Caco-2 (cell line): ENCODE measurements at regions of chr1 and their contacts with region 1.

Region 1: GRCh38 chr1:224116131-224116530 is 2.2 kb downstream of the FBXO28 start:
- DNase-seq: peak in 1 of 2 experiments; percentile 9
- H3K4me3 ChIP-seq: no peak overlapping the region; the same call in 1 of the 2 replicates
- H3K4me3 Mint-ChIP-seq: no peak overlapping the region
- H3K27ac Mint-ChIP-seq: no peak overlapping the region
- H3K4me1 ChIP-seq: peaks cover 8% of the 10 kb centered on the region; the same call in 1 of the 2 replicates
- H3K4me1 Mint-ChIP-seq: no peaks in the 10 kb centered on the region
- H3K27me3 ChIP-seq: no peaks in the 10 kb centered on the region
- H3K27me3 Mint-ChIP-seq: no peaks in the 10 kb centered on the region
- CTCF ChIP-seq: peak; percentile 40 to 55

Region 2: DNA sequence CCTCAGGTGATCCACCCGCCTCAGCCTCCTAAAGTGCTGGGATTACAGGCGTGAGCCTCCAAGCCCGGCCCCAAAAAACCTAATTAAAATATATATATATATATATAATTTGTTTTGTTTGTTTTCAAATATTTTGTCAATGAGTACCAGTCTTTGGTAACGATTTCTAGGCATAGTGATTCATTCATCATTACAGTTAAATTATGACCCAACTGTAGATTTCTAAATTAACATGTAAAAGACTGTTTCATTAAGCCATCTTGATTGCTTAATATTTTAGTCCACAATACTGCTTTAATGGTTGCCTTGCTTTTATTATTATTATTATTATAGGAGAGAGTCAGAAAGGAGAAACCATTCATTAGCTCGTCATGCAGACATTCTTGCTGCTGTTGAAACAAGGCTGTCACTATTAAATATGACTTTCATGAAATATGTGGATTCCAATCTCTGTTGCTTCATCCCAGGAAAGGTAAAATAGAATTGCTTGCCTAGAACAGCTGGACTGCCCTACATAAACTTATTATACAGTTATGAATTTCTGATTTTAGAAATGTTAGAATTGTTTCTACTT is 17.7 kb after region 1 on chr1:
- CTCF ChIA-PET with region 1: no interaction called
- POLR2A ChIA-PET with region 1: no interaction called
- intact Hi-C with region 1: no loop called
- DNase-seq: no peak
- H3K4me3 ChIP-seq: no peak overlapping the region
- H3K4me3 Mint-ChIP-seq: no peak overlapping the region
- H3K27ac Mint-ChIP-seq: no peak overlapping the region
- H3K4me1 ChIP-seq: peaks cover 3% of the 10 kb centered on the region; the same call in 1 of the 2 replicates
- H3K4me1 Mint-ChIP-seq: no peaks in the 10 kb centered on the region
- H3K27me3 ChIP-seq: no peaks in the 10 kb centered on the region
- H3K27me3 Mint-ChIP-seq: no peaks in the 10 kb centered on the region
- CTCF ChIP-seq: no peak

Region 3: GRCh38 chr1:224223819-224224714 is 107.9 kb after region 1 on chr1:
- CTCF ChIA-PET with region 1: no interaction called
- POLR2A ChIA-PET with region 1: no interaction called
- intact Hi-C with region 1: loop called (anchors 5 kb)
- DNase-seq: no peak
- H3K4me3 ChIP-seq: no peak overlapping the region
- H3K4me3 Mint-ChIP-seq: no peak overlapping the region
- H3K27ac Mint-ChIP-seq: no peak overlapping the region
- H3K4me1 ChIP-seq: peaks cover 36% of the 10 kb centered on the region
- H3K4me1 Mint-ChIP-seq: peaks cover 36% of the 10 kb centered on the region
- H3K27me3 ChIP-seq: no peaks in the 10 kb centered on the region
- H3K27me3 Mint-ChIP-seq: no peaks in the 10 kb centered on the region
- CTCF ChIP-seq: no peak